CD8-positive, alpha-beta T cell (primary cell): ENCODE measurements at regions of chr2 and their contacts with region 1.

Region 1: GRCh38 chr2:6865346-6866274 is at the start of gene CMPK2:
- DNase-seq: peak; percentile 53 to 90 (median 82)
- ATAC-seq: peak; percentile 75
- H3K4me3 ChIP-seq: peak within 1 kb of the TSS; percentile 75 to 86
- H3K4me3 Mint-ChIP-seq: peak within 1 kb of the TSS; percentile 99
- H3K27ac ChIP-seq: peak within 1 kb of the TSS; percentile 33 to 72
- H3K27ac Mint-ChIP-seq: peak within 1 kb of the TSS; percentile 96
- H3K4me1 ChIP-seq: peaks cover 19% of the 10 kb centered on the region
- H3K4me1 Mint-ChIP-seq: peaks cover 17% of the 10 kb centered on the region
- H3K27me3 ChIP-seq: no peaks in the 10 kb centered on the region
- H3K27me3 Mint-ChIP-seq: no peaks in the 10 kb centered on the region
- CTCF ChIP-seq: peak; percentile 58
- total RNA-seq, gene CMPK2: 3.0 to 4.0 TPM

Region 2: GRCh38 chr2:6826081-6826913 is 39.3 kb before region 1 on chr2:
- CTCF ChIA-PET with region 1: interaction called, 25 read pairs
- POLR2A ChIA-PET with region 1: interaction called, 4 read pairs
- intact Hi-C with region 1: loop called (anchors 1 kb)
- DNase-seq: peak; percentile 12 to 73 (median 51)
- ATAC-seq: peak; percentile 80
- H3K4me3 ChIP-seq: no peak overlapping the region
- H3K4me3 Mint-ChIP-seq: no peak overlapping the region
- H3K27ac ChIP-seq: no peak overlapping the region
- H3K27ac Mint-ChIP-seq: no peak overlapping the region
- H3K4me1 ChIP-seq: no peaks in the 10 kb centered on the region
- H3K4me1 Mint-ChIP-seq: peaks cover 7% of the 10 kb centered on the region
- H3K27me3 ChIP-seq: no peaks in the 10 kb centered on the region
- H3K27me3 Mint-ChIP-seq: peaks cover 2% of the 10 kb centered on the region
- CTCF ChIP-seq: peak; percentile 89

Region 3: DNA sequence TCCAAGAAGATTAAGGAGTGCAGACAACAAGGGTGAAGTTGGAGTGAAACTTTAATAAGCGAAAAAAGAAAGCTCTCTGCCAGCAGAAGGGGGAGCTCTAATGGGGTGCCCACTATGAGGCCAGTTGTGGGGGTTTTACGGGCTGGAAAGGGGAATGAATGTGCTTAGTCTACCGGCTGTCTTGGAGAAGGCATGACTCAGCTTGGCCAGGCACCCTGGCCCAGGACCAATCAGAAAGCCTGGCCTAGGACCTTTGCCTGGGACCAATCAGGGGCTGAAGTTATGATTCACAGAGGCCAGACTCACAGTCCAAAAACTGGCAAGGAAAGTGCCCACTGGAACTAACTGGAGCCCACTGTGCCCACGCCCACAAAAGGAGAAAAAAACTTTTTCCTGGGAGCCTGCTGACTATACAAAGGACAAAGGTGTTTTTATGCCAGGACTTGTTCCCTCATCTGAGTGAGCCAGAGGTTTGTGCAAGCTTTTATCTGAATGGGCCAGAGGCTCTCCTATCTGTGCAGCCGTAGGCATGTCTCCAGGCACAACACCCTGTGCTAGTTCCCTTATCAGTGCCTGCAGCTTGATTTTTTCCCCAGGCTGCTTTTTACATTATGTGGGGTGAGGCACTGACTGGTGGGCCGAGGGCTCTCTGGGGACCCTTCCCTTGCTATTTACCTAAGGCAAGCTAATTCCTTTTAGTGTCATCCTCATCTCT is 18.5 kb before region 1 on chr2:
- CTCF ChIA-PET with region 1: interaction called, 13 read pairs
- POLR2A ChIA-PET with region 1: interaction called, 5 read pairs
- intact Hi-C with region 1: no loop called
- DNase-seq: no peak
- ATAC-seq: no peak
- H3K4me3 ChIP-seq: no peak overlapping the region
- H3K4me3 Mint-ChIP-seq: no peak overlapping the region
- H3K27ac ChIP-seq: no peak overlapping the region
- H3K27ac Mint-ChIP-seq: no peak overlapping the region
- H3K4me1 ChIP-seq: no peaks in the 10 kb centered on the region
- H3K4me1 Mint-ChIP-seq: peaks cover 1% of the 10 kb centered on the region
- H3K27me3 ChIP-seq: no peaks in the 10 kb centered on the region
- H3K27me3 Mint-ChIP-seq: no peaks in the 10 kb centered on the region
- CTCF ChIP-seq: no peak

Region 4: GRCh38 chr2:6877402-6878304 is 12.0 kb after region 1 on chr2 and contains the start of gene RSAD2:
- CTCF ChIA-PET with region 1: interaction called, 69 read pairs
- POLR2A ChIA-PET with region 1: interaction called, 31 read pairs
- intact Hi-C with region 1: loop called (anchors 1 kb)
- DNase-seq: peak in 7 of 9 experiments; percentile 16 to 81 (median 47)
- ATAC-seq: peak; percentile 84
- H3K4me3 ChIP-seq: peak within 1 kb of the TSS; percentile 56 to 63
- H3K4me3 Mint-ChIP-seq: peak within 1 kb of the TSS; percentile 88
- H3K27ac ChIP-seq: peak within 1 kb of the TSS; percentile 34 to 47
- H3K27ac Mint-ChIP-seq: peak within 1 kb of the TSS; percentile 87
- H3K4me1 ChIP-seq: peaks cover 59% of the 10 kb centered on the region
- H3K4me1 Mint-ChIP-seq: peaks cover 66% of the 10 kb centered on the region
- H3K27me3 ChIP-seq: no peaks in the 10 kb centered on the region
- H3K27me3 Mint-ChIP-seq: no peaks in the 10 kb centered on the region
- CTCF ChIP-seq: no peak
- total RNA-seq, gene RSAD2: 1.8 to 2.1 TPM

Region 5: GRCh38 chr2:6909431-6910385 is 44.1 kb after region 1 on chr2:
- CTCF ChIA-PET with region 1: interaction called, 16 read pairs
- POLR2A ChIA-PET with region 1: interaction called, 4 read pairs
- intact Hi-C with region 1: loop called in 1 of 2 experiments (anchors 2 kb)
- DNase-seq: peak in 5 of 9 experiments; percentile 26 to 84 (median 53)
- ATAC-seq: peak; percentile 69
- H3K4me3 ChIP-seq: peak overlapping the region; percentile 1 to 19
- H3K4me3 Mint-ChIP-seq: peak overlapping the region; percentile 67
- H3K27ac ChIP-seq: peak overlapping the region; percentile 1 to 60
- H3K27ac Mint-ChIP-seq: peak overlapping the region; percentile 88
- H3K4me1 ChIP-seq: peaks cover 91% of the 10 kb centered on the region
- H3K4me1 Mint-ChIP-seq: peaks cover 89% of the 10 kb centered on the region
- H3K27me3 ChIP-seq: no peaks in the 10 kb centered on the region
- H3K27me3 Mint-ChIP-seq: no peaks in the 10 kb centered on the region
- CTCF ChIP-seq: no peak

Region 6: DNA sequence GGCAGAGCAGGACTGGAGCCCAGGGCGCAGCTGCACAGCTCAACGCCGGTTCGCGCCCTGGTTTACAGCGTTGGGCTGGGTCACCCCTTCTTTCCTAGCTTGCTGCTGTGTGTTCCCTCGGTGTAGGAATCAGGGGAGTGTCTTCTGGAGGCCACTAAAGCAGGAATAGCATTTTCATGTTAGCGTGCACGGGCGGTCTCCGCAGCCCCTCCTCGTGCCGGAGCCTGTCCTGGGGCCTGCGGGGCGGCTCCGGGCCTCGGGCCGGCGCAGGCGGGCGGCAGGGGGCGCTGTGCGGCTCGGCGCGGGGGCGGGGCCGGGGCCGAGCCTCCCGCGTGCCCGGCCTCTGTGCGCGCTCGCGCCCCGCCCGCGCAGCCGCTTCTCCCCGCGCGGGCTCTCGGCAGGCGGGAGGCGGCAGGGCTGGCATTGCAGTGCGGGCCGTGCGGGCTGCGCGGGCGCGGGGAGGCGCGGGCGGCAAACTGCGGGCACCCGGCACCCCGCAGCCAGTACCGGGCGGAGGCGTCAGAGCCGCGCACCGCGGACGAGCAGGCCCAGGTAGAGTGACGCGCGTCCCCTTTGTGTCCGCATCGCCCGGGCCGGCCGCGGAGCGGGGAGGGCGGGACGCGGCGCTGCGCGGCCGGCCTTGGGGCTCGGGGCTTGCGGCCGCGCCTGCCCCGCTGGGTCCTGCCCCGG is 51.6 kb after region 1 on chr2 and contains the start of gene RNF144A:
- CTCF ChIA-PET with region 1: interaction called, 8 read pairs
- POLR2A ChIA-PET with region 1: interaction called, 11 read pairs
- intact Hi-C with region 1: loop called (anchors 2 to 5 kb)
- DNase-seq: peak; percentile 52 to 89 (median 74)
- ATAC-seq: peak; percentile 77
- H3K4me3 ChIP-seq: peak within 1 kb of the TSS; percentile 57 to 65
- H3K4me3 Mint-ChIP-seq: peak within 1 kb of the TSS; percentile 80
- H3K27ac ChIP-seq: peak within 1 kb of the TSS in 1 of 2 experiments; percentile 28
- H3K27ac Mint-ChIP-seq: no peak within 1 kb of the TSS
- H3K4me1 ChIP-seq: peaks cover 79% of the 10 kb centered on the region
- H3K4me1 Mint-ChIP-seq: peaks cover 75% of the 10 kb centered on the region
- H3K27me3 ChIP-seq: no peaks in the 10 kb centered on the region
- H3K27me3 Mint-ChIP-seq: no peaks in the 10 kb centered on the region
- CTCF ChIP-seq: peak; percentile 63
- total RNA-seq, gene RNF144A: 25.8 to 28.8 TPM

Region 7: GRCh38 chr2:7154656-7155055 is 289.0 kb after region 1 on chr2:
- CTCF ChIA-PET with region 1: no interaction called
- POLR2A ChIA-PET with region 1: no interaction called
- intact Hi-C with region 1: no loop called
- DNase-seq: no peak
- ATAC-seq: no peak
- H3K4me3 ChIP-seq: no peak overlapping the region
- H3K4me3 Mint-ChIP-seq: no peak overlapping the region
- H3K27ac ChIP-seq: no peak overlapping the region
- H3K27ac Mint-ChIP-seq: no peak overlapping the region
- H3K4me1 ChIP-seq: no peaks in the 10 kb centered on the region
- H3K4me1 Mint-ChIP-seq: no peaks in the 10 kb centered on the region
- H3K27me3 ChIP-seq: no peaks in the 10 kb centered on the region
- H3K27me3 Mint-ChIP-seq: no peaks in the 10 kb centered on the region
- CTCF ChIP-seq: no peak

Region 8: DNA sequence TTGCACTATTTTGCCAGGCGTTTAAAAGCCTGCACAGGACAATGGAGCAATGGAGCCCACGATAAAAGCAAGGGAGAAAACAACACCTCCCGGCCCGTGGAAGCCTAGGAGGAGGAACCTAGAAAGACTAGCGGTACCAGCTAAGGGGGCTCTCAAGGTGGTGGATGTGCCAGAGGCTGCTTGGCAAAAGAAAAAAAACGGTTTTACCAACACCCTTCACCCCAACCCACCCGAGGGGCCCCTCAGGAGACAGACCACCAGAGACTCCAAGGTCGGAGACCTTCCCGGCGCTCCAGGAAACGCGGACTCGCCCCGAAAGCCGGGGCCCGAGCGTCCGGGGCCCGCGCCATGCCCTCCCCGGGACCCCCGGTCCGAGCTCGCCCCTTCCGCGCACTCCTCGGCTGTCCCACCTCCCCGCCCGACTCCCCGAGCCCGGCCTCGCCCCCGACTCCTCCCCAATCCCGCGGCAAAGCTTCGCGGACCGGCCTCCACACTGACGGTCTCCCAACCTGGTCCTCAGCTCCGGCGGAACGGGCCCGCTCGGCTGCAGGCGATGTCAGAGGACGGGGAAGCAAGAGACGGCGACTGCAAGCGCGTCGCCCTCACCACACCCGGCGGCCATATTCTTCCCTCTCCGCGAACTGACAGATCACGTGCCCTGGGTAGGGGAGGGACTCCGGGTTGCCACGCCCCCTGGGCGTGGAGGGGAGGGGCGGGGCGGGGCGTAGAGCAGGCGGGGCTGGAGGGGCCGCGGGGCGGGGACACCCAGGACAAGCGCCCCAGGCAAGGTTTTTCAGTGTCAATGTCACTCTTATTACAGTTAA is 1971.6 kb after region 1 on chr2 and contains the start of gene KIDINS220:
- CTCF ChIA-PET with region 1: no interaction called
- POLR2A ChIA-PET with region 1: no interaction called
- intact Hi-C with region 1: loop called (anchors 10 kb)
- DNase-seq: peak; percentile 74 to 92 (median 85)
- ATAC-seq: peak; percentile 96
- H3K4me3 ChIP-seq: peak within 1 kb of the TSS; percentile 76 to 96
- H3K4me3 Mint-ChIP-seq: peak within 1 kb of the TSS; percentile 100
- H3K27ac ChIP-seq: peak within 1 kb of the TSS; percentile 62 to 81
- H3K27ac Mint-ChIP-seq: peak within 1 kb of the TSS; percentile 99
- H3K4me1 ChIP-seq: peaks cover 49% of the 10 kb centered on the region
- H3K4me1 Mint-ChIP-seq: peaks cover 55% of the 10 kb centered on the region
- H3K27me3 ChIP-seq: peaks cover 0 to 2% of the 10 kb centered on the region in 2 experiments
- H3K27me3 Mint-ChIP-seq: no peaks in the 10 kb centered on the region
- CTCF ChIP-seq: no peak
- total RNA-seq, gene KIDINS220: 26.2 to 28.8 TPM